ENCODE measurements at regions of chr1 and their contacts with region 1.

Region 1: DNA sequence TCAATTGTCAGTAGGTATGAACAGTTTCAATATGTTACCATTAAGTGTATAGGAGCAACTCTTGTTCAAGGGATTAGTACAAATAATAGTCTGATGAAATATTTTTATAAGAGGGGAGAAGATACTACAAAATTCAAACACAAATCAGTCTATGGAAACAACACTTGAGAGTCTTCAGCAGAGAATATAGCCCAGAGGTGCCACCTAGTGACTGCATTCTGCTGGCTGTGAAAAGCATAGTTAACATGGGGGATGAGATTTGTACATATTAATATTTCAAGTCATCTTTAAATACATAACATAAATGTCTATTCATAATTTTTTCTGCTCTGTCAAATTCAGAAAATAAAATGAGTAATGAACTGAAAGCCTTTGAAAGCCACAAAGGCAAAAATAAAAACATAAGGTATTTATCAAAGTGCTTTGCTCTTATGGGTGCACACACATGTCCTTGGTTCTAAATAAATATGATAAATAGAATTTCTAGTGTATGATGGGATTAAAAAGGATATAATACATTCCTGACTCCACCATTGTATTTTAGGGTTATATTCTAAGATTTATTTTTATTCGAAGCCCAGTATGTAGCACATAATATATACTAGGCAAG is 440.9 kb upstream of the ZRANB2 start:
- DNase-seq: peak; percentile 23
- H3K4me3 ChIP-seq: no peak overlapping the region
- H3K27ac ChIP-seq: no peak overlapping the region
- H3K4me1 ChIP-seq: no peaks in the 10 kb centered on the region
- CTCF ChIP-seq: peak; percentile 81

Region 2: GRCh38 chr1:71093938-71094337 is 427.8 kb before region 1 on chr1:
- CTCF ChIA-PET with region 1: no interaction called
- POLR2A ChIA-PET with region 1: no interaction called
- intact Hi-C with region 1: loop called (anchors 10 kb)
- DNase-seq: no peak
- H3K4me3 ChIP-seq: no peak overlapping the region
- H3K27ac ChIP-seq: no peak overlapping the region
- H3K4me1 ChIP-seq: no peaks in the 10 kb centered on the region
- CTCF ChIP-seq: peak; percentile 61

Region 3: GRCh38 chr1:71721532-71721931 is 199.8 kb after region 1 on chr1:
- CTCF ChIA-PET with region 1: no interaction called
- POLR2A ChIA-PET with region 1: no interaction called
- intact Hi-C with region 1: no loop called
- DNase-seq: no peak
- H3K4me3 ChIP-seq: no peak overlapping the region
- H3K27ac ChIP-seq: no peak overlapping the region
- H3K4me1 ChIP-seq: no peaks in the 10 kb centered on the region
- CTCF ChIP-seq: 0 out of 2 replicates have a peak, but pooled peaks have one; percentile 33

Measured in OCI-LY7 (cell line).